ENCODE measurements at regions of chr10 and their contacts with region 1.

Region 1: DNA sequence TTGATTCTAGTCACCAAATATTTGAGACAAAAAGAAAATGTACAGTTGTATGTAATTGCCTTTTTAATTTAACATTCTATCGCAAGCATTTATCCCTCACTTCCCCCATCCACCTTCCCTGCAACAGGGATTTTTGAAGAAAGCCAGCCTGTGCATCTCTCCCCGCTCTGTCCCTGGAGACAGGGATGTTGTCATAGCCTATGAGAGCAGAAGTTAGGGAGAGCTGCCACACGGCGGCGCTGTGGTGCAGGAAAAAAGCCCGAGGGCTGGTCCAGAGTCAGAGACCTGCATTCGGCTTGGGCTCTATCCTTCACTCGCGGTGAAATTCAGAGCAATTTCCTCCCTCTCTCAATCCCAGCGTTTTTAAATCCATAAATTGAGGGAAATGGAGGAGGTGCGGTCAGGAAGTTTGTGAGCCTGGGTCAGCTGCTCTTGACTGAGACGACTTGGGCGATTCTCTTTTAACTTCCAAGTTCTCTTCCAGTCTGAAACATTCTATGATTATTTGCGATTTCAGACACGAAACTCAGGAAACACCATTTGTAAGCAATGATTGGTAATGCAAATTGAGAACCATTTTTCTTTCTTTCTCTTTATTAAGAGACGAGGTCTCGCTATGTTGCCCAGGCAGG is 17.5 kb downstream of the HKDC1 start:
- DNase-seq: peak; percentile 85 to 96 (median 94)
- ATAC-seq: peak; percentile 94 to 95
- H3K4me3 ChIP-seq: no peak overlapping the region
- H3K27ac ChIP-seq: no peak overlapping the region
- H3K4me1 ChIP-seq: peaks cover 3% of the 10 kb centered on the region
- H3K27me3 ChIP-seq: no peaks in the 10 kb centered on the region

Region 2: GRCh38 chr10:69392481-69393000 is 154.9 kb after region 1 on chr10:
- intact Hi-C with region 1: loop called (anchors 2 to 5 kb)
- DNase-seq: peak; percentile 85 to 94 (median 93)
- ATAC-seq: peak; percentile 87 to 90
- H3K4me3 ChIP-seq: no peak overlapping the region
- H3K27ac ChIP-seq: peak overlapping the region; percentile 9
- H3K4me1 ChIP-seq: no peaks in the 10 kb centered on the region
- H3K27me3 ChIP-seq: no peaks in the 10 kb centered on the region

Region 3: GRCh38 chr10:69408318-69409175 is 170.9 kb after region 1 on chr10:
- intact Hi-C with region 1: loop called in 1 of 4 experiments (anchors 5 kb)
- DNase-seq: peak; percentile 97 to 98 (median 98)
- ATAC-seq: peak; percentile 83 to 87
- H3K4me3 ChIP-seq: peak overlapping the region; percentile 26
- H3K27ac ChIP-seq: peak overlapping the region; percentile 90
- H3K4me1 ChIP-seq: peaks cover 10% of the 10 kb centered on the region
- H3K27me3 ChIP-seq: no peaks in the 10 kb centered on the region

Region 4: GRCh38 chr10:69506834-69507721 is 269.4 kb after region 1 on chr10:
- intact Hi-C with region 1: loop called in 1 of 4 experiments (anchors 10 kb)
- DNase-seq: peak in 1 of 3 donors; percentile 56
- ATAC-seq: peak; percentile 15 to 38
- H3K4me3 ChIP-seq: no peak overlapping the region
- H3K27ac ChIP-seq: no peak overlapping the region
- H3K4me1 ChIP-seq: no peaks in the 10 kb centered on the region
- H3K27me3 ChIP-seq: no peaks in the 10 kb centered on the region

Measured in right cardiac atrium (tissue), 5 donors.